Naive thymus-derived CD4-positive, alpha-beta T cell (primary cell): ENCODE measurements at regions of chr6 and their contacts with region 1.

Region 1: GRCh38 chr6:108492131-108492766 is 68.5 kb upstream of the FOXO3 start:
- DNase-seq: peak in 3 of 9 donors; percentile 16 to 18 (median 18)
- ATAC-seq: peak; percentile 38
- H3K4me3 ChIP-seq: no peak overlapping the region
- H3K4me3 Mint-ChIP-seq: no peak overlapping the region
- H3K27ac ChIP-seq: no peak overlapping the region
- H3K27ac Mint-ChIP-seq: no peak overlapping the region
- H3K4me1 ChIP-seq: no peaks in the 10 kb centered on the region
- H3K4me1 Mint-ChIP-seq: no peaks in the 10 kb centered on the region
- H3K27me3 ChIP-seq: no peaks in the 10 kb centered on the region
- H3K27me3 Mint-ChIP-seq: peaks cover 0 to 11% (median 0%) of the 10 kb centered on the region in 5 donors

Region 2: DNA sequence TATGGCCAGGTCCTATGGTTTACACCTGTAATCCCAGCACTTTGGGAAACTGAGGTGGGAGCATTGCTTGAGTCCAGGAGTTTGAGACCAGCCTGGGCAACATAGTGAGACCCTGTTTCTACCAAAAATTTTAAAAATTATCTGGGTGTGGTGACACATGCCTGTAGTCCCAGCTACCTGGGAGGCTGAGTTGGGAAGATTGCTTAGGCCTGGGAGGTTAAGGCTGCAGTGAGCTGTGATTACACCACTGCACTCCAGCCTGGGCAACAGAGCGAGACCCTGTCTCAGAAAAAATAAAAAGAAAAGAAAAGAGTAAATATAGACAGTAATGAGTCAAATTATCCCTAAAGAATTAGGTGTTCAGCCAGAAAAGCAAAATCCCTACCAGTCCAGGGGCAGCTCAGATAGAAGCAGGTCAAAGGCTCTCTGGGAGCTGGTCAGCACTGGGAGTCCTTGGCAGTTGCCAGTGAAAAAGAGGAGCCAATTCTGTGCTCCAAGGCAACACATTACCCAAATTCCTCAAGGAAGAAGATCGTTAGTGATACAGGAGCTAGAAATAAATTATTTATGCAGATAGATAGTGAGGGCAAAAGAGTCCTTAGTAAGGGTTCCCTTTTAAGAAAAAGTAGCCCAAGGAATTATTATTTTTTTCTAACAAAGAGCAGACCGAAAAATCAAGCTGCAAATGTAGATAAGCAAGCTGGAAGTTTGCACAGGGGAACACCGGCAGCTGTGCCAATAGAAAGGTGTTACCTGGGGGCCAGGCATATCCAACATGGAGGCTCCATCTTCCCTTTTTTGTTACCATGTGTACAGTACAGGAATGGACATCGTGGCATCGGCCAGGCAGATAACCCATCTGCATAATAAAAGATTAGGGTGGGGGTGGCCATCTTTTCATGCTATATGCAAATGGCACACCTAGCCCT is 502.8 kb before region 1 on chr6:
- CTCF ChIA-PET with region 1: no interaction called
- POLR2A ChIA-PET with region 1: no interaction called
- intact Hi-C with region 1: loop called in 1 of 2 experiments (anchors 10 kb)
- DNase-seq: no peak
- ATAC-seq: no peak
- H3K4me3 ChIP-seq: no peak overlapping the region
- H3K4me3 Mint-ChIP-seq: no peak overlapping the region
- H3K27ac ChIP-seq: no peak overlapping the region
- H3K27ac Mint-ChIP-seq: no peak overlapping the region
- H3K4me1 ChIP-seq: no peaks in the 10 kb centered on the region
- H3K4me1 Mint-ChIP-seq: peaks cover 0 to 11% (median 4%) of the 10 kb centered on the region in 7 donors
- H3K27me3 ChIP-seq: no peaks in the 10 kb centered on the region
- H3K27me3 Mint-ChIP-seq: peaks cover 0 to 2% (median 0%) of the 10 kb centered on the region in 5 donors

Region 3: DNA sequence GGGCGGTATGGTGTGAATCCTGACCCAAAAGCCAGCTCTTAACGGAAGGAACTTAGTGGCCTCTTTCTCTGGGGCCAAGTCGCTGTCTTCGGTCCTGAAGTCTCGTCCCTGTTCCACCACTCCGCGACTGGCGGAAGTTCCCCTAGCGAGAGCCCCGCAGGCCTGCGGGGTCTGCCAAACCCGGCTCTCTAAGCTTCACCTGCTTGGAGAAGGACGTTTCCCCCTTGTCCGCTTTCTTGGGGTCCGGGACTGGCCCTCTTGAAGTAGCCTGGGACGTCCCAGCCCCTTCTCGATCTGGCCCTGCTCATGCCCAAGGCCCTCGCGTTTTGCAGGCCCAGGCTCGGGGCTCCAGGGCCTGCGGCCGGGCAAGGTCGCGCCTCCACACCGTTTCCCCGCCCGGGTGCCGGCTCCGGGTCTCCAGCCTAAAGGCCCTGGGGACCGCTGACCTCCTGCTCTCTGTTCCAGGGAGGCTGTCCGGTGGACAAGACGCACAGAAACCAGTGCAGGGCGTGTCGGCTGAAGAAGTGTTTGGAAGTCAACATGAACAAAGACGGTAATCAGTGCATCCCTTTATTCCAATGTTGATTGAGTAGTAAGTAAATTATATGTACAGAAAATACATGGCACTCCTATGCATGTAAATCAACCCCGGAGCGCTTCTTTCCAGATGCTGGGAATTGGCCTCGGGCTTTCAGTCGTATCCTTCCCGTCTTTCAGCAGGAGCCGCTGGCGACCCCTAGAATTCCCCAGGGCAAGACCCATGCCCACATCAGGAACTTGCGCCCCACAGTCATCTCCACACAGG is 317.7 kb before region 1 on chr6:
- CTCF ChIA-PET with region 1: no interaction called
- POLR2A ChIA-PET with region 1: no interaction called
- intact Hi-C with region 1: loop called in 1 of 2 experiments (anchors 1 kb)
- DNase-seq: peak in 4 of 9 donors; percentile 18 to 37 (median 26)
- ATAC-seq: peak; percentile 51
- H3K4me3 ChIP-seq: no peak overlapping the region
- H3K4me3 Mint-ChIP-seq: peak overlapping the region in 5 of 10 donors; percentile 64 to 76 (median 70)
- H3K27ac ChIP-seq: no peak overlapping the region
- H3K27ac Mint-ChIP-seq: no peak overlapping the region
- H3K4me1 ChIP-seq: peaks cover 2 to 11% of the 10 kb centered on the region in 2 donors
- H3K4me1 Mint-ChIP-seq: peaks cover 13 to 37% (median 26%) of the 10 kb centered on the region in 7 donors
- H3K27me3 ChIP-seq: peaks cover 17 to 40% of the 10 kb centered on the region in 2 donors
- H3K27me3 Mint-ChIP-seq: peaks cover 76 to 96% (median 88%) of the 10 kb centered on the region in 5 donors

Region 4: DNA sequence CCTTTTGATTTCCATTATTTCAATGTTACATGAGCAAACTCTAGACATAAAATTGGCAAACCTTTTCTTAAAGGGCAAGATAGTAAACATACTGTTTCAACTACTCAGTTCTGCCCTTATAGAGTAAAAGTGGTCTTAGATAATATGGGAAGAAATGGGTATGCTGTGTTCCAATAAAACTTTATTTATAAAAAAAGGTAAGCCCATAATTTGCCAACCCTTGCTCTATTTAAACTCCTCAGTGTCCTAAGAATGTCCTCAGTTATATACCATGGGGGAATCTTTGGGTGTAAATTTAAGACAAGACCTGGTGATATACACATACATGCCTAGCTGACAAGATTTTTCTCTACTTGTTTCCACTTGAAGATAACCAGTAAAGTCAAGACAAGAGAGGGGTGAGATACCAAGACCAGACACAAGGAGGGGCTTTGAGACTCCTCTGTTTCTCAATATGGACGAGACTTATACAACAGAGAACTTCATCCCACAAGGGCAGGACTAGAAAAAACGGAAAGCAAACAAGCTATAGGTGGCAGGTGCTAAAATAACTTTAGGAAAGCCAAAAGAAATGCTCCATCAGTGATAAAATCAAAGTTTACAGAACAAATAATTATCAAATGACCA is 241.9 kb before region 1 on chr6:
- CTCF ChIA-PET with region 1: no interaction called
- POLR2A ChIA-PET with region 1: no interaction called
- intact Hi-C with region 1: loop called in 1 of 2 experiments (anchors 10 kb)
- DNase-seq: no peak
- ATAC-seq: no peak
- H3K4me3 ChIP-seq: no peak overlapping the region
- H3K4me3 Mint-ChIP-seq: peak overlapping the region in 4 of 10 donors; percentile 17 to 51 (median 30)
- H3K27ac ChIP-seq: no peak overlapping the region
- H3K27ac Mint-ChIP-seq: peak overlapping the region in 2 of 9 donors; percentile 31 to 65
- H3K4me1 ChIP-seq: peaks cover 0 to 4% of the 10 kb centered on the region in 2 donors
- H3K4me1 Mint-ChIP-seq: peaks cover 36 to 75% (median 68%) of the 10 kb centered on the region in 7 donors
- H3K27me3 ChIP-seq: no peaks in the 10 kb centered on the region
- H3K27me3 Mint-ChIP-seq: no peaks in the 10 kb centered on the region

Region 5: DNA sequence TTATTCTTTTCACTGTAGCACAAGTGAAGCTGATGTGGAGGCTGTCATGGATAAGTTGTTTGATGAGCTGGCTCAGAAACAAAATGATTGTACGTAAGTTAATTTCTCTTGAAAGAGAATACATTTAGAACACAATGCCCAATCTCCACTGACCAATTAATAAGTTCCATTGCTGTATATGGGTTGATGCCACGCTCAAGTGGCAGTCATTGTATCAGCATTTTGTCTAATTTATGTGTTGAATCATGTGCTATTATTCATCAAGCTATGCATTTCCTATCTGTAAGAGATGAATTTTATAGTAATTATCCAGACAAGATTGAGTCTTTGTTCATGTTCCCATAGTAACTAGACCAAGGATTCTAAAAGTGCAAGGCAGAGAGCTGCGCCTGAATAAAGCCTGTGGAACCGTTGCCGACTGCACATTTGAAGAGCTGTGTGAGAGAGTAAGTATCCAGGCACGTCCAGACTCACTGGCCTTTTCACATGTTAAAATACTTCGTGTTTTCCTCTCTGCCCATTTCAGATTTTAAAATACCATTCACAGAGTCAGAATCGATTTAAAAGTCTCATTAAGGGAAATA is 15.3 kb before region 1 on chr6:
- CTCF ChIA-PET with region 1: no interaction called
- POLR2A ChIA-PET with region 1: no interaction called
- intact Hi-C with region 1: no loop called
- DNase-seq: no peak
- ATAC-seq: no peak
- H3K4me3 ChIP-seq: no peak overlapping the region
- H3K4me3 Mint-ChIP-seq: no peak overlapping the region
- H3K27ac ChIP-seq: no peak overlapping the region
- H3K27ac Mint-ChIP-seq: no peak overlapping the region
- H3K4me1 ChIP-seq: no peaks in the 10 kb centered on the region
- H3K4me1 Mint-ChIP-seq: no peaks in the 10 kb centered on the region
- H3K27me3 ChIP-seq: no peaks in the 10 kb centered on the region
- H3K27me3 Mint-ChIP-seq: peaks cover 0 to 22% (median 0%) of the 10 kb centered on the region in 5 donors

Region 6: GRCh38 chr6:108518714-108519576 is 26.7 kb after region 1 on chr6:
- CTCF ChIA-PET with region 1: no interaction called
- POLR2A ChIA-PET with region 1: no interaction called
- intact Hi-C with region 1: no loop called
- DNase-seq: no peak
- ATAC-seq: no peak
- H3K4me3 ChIP-seq: no peak overlapping the region
- H3K4me3 Mint-ChIP-seq: no peak overlapping the region
- H3K27ac ChIP-seq: no peak overlapping the region
- H3K27ac Mint-ChIP-seq: no peak overlapping the region
- H3K4me1 ChIP-seq: no peaks in the 10 kb centered on the region
- H3K4me1 Mint-ChIP-seq: no peaks in the 10 kb centered on the region
- H3K27me3 ChIP-seq: no peaks in the 10 kb centered on the region
- H3K27me3 Mint-ChIP-seq: peaks cover 0 to 15% (median 0%) of the 10 kb centered on the region in 5 donors

Region 7: GRCh38 chr6:109705258-109705657 is 1213.0 kb after region 1 on chr6:
- CTCF ChIA-PET with region 1: no interaction called
- POLR2A ChIA-PET with region 1: no interaction called
- intact Hi-C with region 1: no loop called
- DNase-seq: peak; percentile 46 to 74 (median 61)
- ATAC-seq: peak; percentile 99
- H3K4me3 ChIP-seq: no peak overlapping the region
- H3K4me3 Mint-ChIP-seq: no peak overlapping the region
- H3K27ac ChIP-seq: no peak overlapping the region
- H3K27ac Mint-ChIP-seq: no peak overlapping the region
- H3K4me1 ChIP-seq: no peaks in the 10 kb centered on the region
- H3K4me1 Mint-ChIP-seq: peaks cover 7 to 62% (median 38%) of the 10 kb centered on the region in 7 donors
- H3K27me3 ChIP-seq: no peaks in the 10 kb centered on the region
- H3K27me3 Mint-ChIP-seq: no peaks in the 10 kb centered on the region